Left colon (tissue), 2 donors: ENCODE measurements at regions of chr5 and their contacts with region 1.

Region 1: GRCh38 chr5:138178516-138179276 is at the starts of genes BRD8 and KIF20A:
- DNase-seq: peak; percentile 97 to 98
- ATAC-seq: peak; percentile 93
- total RNA-seq, gene BRD8: 29.6 to 33.8 TPM
- total RNA-seq, gene KIF20A: 4.0 to 6.5 TPM

Region 2: DNA sequence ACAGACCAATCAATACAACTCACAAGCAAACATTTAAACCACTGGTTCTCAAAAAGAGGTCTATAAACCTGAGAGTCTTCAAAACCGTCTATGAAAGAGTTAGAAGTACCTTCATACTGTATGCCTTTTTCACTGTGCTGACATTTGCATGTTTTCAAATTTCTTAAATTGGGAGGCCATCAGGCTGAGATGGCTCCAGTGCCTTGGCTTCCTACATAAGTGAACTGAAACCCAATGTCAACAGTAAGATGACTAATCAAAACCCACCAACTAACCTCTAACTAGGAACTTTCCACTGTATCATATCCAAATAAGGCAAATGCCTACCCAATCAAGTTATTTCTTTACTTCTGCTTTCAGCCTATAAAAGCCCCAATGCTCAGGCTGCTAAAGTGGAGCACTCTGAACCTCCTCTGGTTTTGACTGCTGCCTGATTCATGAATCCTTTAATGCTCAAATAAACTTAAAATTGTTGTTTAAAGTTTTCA is 180.9 kb before region 1 on chr5:
- intact Hi-C with region 1: no loop called
- DNase-seq: no peak
- ATAC-seq: no peak

Region 3: DNA sequence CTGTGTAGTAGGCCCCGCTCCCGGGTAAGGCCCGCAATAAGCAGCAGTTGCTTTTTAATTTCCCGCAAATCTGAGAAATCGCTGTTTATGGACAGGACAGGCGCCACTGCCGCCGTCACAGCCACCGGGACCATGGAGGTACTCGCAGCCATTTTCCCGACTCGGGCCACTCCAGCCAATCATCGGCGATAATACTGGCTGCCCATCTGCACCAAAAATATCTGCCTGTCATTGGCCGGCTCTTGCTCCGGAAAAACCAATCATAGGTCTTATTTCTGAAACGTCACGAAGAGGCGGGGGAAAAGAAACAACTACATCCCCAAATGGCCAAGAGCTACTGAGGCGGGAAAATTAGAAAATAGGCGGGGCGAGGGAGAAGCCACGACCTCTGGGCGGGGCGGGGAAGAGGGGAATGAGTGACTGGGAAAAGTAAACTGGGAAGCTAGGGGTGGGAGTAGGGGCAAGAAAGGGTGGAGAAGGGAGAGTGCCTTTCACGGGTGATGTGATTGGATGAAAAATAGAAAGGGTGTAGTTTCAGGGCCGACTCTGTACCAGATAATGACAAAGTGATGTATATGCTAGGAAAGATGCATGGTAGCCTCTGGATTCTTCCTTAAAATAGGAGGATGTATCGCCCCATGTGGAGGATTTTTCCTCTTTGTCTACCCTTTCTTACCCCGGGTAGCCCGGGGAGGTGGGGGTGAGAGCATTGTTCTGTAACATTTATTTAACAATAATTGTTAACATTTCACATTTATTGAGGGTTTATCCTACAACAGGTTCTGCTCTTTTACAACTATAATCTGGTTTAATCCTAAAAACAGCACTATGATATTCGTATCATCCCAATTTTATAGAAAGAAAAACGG is 34.7 kb after region 1 on chr5 and contains the start of gene CDC23:
- intact Hi-C with region 1: loop called in 1 of 2 experiments (anchors 5 kb)
- DNase-seq: peak; percentile 90 to 93
- ATAC-seq: peak; percentile 99
- total RNA-seq, gene CDC23: 13.9 to 14.9 TPM